ENCODE measurements at regions of chr12 and their contacts with region 1.

Region 1: GRCh38 chr12:117472983-117473382 is 111.6 kb upstream of the NOS1 start:
- DNase-seq: peak; percentile 36 to 84
- H3K4me3 ChIP-seq: no peak overlapping the region
- H3K27ac ChIP-seq: no peak overlapping the region
- H3K4me1 ChIP-seq: peaks cover 0 to 3% (median 0%) of the 10 kb centered on the region in 4 experiments; a peak in 3 of 7 replicates
- H3K27me3 ChIP-seq: no peaks in the 10 kb centered on the region
- CTCF ChIP-seq: peak; percentile 90 to 97 (median 97)
- EP300 ChIP-seq: no peak
- POLR2A ChIP-seq: no peak
- RAD21 ChIP-seq: peak; percentile 60 to 70

Region 2: DNA sequence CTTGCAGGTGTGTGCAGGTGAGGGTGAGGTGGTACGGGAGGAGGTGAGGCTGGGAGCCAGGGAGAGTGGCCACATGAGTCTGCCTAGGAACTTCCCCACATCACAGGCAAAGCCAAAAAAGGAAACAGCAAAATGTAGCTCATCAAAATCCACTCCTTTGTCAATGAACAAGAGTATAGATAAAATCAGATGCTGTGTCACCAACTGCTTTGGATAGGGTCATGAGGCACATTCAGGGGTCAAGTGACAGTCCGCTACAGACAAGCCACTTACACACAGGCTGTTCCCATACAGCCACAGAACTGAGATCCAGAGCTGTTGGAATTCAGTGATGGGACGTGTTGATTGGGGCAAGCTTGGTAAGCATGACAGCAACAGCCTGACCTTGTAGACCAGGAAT is 11.3 kb before region 1 on chr12:
- CTCF ChIA-PET with region 1: interaction called, 33 read pairs
- POLR2A ChIA-PET with region 1: no interaction called
- DNase-seq: no peak
- H3K4me3 ChIP-seq: no peak overlapping the region
- H3K27ac ChIP-seq: no peak overlapping the region
- H3K4me1 ChIP-seq: no peaks in the 10 kb centered on the region
- H3K27me3 ChIP-seq: no peaks in the 10 kb centered on the region
- CTCF ChIP-seq: no peak
- EP300 ChIP-seq: no peak
- POLR2A ChIP-seq: no peak
- RAD21 ChIP-seq: no peak

Region 3: DNA sequence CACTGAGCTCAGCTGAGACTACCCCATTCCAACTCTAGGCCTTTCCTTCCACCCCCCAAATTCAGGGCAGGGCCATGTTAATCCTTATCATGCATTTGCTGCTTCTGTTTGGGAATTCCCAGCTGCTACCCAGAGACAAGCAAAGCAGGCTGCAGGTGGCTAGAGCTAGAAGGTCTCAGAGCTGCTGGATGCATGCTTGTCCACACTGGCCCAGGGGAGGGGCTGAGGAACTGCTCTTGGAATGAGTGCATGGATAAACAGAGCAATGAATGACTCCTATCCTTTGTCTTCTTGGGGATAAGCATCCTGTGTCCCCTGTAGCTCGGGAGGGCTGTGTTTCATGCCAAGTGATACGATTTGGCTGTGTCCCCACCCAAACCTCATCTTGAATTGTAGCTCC is 25.3 kb after region 1 on chr12:
- CTCF ChIA-PET with region 1: interaction called, 12 read pairs
- POLR2A ChIA-PET with region 1: no interaction called
- DNase-seq: no peak
- H3K4me3 ChIP-seq: no peak overlapping the region
- H3K27ac ChIP-seq: no peak overlapping the region
- H3K4me1 ChIP-seq: peaks cover 0 to 6% (median 3%) of the 10 kb centered on the region in 4 experiments; a peak in 3 of 7 replicates
- H3K27me3 ChIP-seq: no peaks in the 10 kb centered on the region
- CTCF ChIP-seq: no peak
- EP300 ChIP-seq: no peak
- POLR2A ChIP-seq: no peak
- RAD21 ChIP-seq: no peak

Region 4: DNA sequence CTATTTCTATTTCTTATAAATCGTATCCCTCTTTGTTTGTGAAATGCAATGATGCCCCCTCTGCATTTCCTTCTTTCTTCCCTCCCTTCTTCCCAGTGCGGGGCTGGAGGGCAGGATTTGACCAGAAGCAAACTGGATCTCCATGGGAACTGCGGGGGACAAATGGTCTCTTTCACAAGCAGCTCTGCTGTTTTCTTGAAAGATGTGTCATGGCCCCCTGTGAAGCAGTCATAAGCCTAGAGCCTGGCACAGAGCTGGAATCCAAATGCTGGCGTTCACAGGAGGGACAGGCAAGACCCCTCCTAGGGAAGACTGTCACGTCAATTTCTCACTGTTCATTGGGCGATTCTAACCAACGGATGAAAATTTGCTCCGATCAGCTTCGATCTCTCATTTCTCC is 91.9 kb after region 1 on chr12:
- CTCF ChIA-PET with region 1: no interaction called
- POLR2A ChIA-PET with region 1: no interaction called
- DNase-seq: no peak
- H3K4me3 ChIP-seq: no peak overlapping the region
- H3K27ac ChIP-seq: no peak overlapping the region
- H3K4me1 ChIP-seq: 0 out of 7 replicates have a peak, but pooled peaks cover 0 to 2% (median 0%) of the 10 kb centered on the region in 4 experiments
- H3K27me3 ChIP-seq: no peaks in the 10 kb centered on the region
- CTCF ChIP-seq: no peak
- EP300 ChIP-seq: no peak
- POLR2A ChIP-seq: no peak
- RAD21 ChIP-seq: no peak

Measured in H1 (cell line).